PC-9 (cell line): ENCODE measurements at regions of chr2 and their contacts with region 1.

Region 1: GRCh38 chr2:96305091-96305978 is at the start of gene SNRNP200:
- DNase-seq: peak; percentile 84 to 88
- H3K4me3 ChIP-seq: peak within 1 kb of the TSS; percentile 86
- H3K27ac ChIP-seq: peak within 1 kb of the TSS; percentile 51
- H3K4me1 ChIP-seq: peaks cover 21% of the 10 kb centered on the region
- H3K27me3 ChIP-seq: no peaks in the 10 kb centered on the region
- CTCF ChIP-seq: no peak
- total RNA-seq, gene SNRNP200: 214 and 229 TPM in 2 replicates

Region 2: DNA sequence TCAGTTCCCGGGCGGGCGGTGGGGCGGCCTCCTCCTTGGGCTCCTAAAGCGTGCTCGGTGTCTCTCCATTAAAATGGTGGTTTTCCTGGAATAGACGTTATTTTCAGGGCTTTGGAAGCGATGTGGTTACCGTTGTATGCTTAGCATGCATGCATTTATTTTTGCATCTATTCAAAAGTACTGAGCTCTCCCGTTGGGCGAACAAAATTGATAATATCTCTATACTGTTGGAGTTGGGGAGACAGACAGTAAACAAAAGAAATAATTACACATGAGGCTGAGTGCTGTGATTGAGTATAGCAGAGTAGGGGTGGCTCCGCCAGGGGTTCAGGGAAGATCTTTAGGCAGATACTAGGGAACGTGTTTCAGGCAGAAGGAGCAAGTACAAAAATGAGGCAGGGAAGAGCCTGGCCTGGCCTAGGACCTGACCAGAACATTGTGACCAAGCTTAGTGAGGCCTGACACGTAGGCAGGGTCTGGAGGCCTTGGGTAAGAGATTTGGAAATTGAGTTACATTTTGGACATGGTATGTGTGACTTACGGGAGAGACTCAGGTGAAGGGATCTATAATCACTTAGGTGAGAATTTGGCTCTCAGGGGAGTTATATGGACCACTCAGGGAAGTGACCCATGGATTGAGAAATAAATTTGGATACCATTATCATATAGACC is 30.9 kb after region 1 on chr2:
- CTCF ChIA-PET with region 1: interaction called, 4 read pairs
- POLR2A ChIA-PET with region 1: no interaction called
- intact Hi-C with region 1: loop called (anchors 1 kb)
- DNase-seq: no peak
- H3K4me3 ChIP-seq: peak overlapping the region; percentile 79
- H3K27ac ChIP-seq: no peak overlapping the region
- H3K4me1 ChIP-seq: peaks cover 23% of the 10 kb centered on the region
- H3K27me3 ChIP-seq: no peaks in the 10 kb centered on the region
- CTCF ChIP-seq: no peak

Region 3: GRCh38 chr2:96531872-96532704 is 226.8 kb after region 1 on chr2:
- CTCF ChIA-PET with region 1: no interaction called
- POLR2A ChIA-PET with region 1: no interaction called
- intact Hi-C with region 1: loop called (anchors 5 kb)
- DNase-seq: peak; percentile 92 to 99
- H3K4me3 ChIP-seq: peak overlapping the region; percentile 51
- H3K27ac ChIP-seq: 0 out of 2 replicates have a peak overlapping the region, but pooled peaks have one; percentile 59
- H3K4me1 ChIP-seq: peaks cover 36% of the 10 kb centered on the region
- H3K27me3 ChIP-seq: no peaks in the 10 kb centered on the region
- CTCF ChIP-seq: no peak

Region 4: DNA sequence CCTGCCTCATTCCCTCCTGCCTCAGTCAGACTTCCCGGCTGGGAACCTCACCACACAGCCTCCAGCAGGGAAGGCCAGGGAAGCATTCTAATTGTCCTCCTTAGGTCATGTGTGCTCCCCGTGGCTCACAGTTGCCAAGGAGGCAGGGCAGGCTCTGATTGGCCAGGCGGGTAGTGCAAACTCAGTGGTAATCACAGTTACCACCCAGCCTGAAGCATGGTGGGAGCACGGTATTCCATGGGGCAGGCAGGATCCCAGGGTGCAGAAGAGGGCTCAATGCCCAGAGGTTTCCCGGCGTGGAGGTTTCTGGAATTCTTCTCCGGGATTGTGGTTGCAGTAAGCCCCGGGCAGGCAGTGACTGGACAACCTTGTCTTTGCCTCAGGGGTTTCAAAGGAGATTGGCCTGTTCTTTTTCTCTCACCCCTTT is 364.3 kb after region 1 on chr2:
- CTCF ChIA-PET with region 1: no interaction called
- POLR2A ChIA-PET with region 1: no interaction called
- intact Hi-C with region 1: no loop called
- DNase-seq: no peak
- H3K4me3 ChIP-seq: no peak overlapping the region
- H3K27ac ChIP-seq: no peak overlapping the region
- H3K4me1 ChIP-seq: peaks cover 13% of the 10 kb centered on the region
- H3K27me3 ChIP-seq: no peaks in the 10 kb centered on the region
- CTCF ChIP-seq: no peak